ENCODE measurements at regions of chr14 and their contacts with region 1.

Region 1: DNA sequence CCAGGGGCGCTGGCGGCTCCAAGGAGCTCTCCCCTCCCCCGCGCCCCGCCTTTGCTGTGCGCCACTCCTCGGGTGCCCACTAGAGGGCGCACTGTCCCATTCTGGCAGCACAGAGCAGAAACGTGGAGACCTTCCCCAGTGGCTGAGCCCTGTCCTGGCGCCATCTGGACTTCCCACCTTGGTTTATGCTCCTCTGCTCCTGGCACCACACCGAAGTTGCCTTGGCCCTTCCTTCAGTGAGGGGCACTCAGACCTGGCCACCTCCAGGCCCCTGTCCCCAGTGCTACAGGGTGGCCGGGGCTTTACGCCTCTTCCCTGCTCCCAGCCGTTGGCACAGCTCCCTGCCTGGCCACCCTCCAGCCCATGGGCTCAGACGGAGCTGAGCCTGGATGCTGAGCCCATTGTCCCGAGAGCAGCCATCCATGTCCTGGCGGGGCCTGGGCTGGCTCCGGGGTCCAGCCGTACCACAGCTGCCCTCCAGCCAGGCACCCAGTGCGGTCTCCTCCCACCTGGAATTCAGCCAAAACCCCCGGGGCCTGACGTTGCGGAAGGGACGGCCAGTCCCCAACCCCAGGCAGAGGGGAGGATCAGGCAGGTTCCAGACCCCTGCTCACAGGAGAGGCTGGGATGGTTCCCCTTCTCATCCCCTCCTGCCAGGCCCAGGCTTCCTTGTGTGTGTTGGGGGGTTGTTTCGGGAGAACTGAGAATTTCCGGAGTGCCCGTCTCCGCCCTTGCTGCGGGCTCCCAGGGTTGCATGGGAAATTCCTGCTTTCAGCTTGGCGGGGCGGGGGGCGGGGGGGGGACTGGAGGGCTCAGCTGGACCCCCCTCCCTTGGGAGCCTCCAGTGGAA is 5.5 kb upstream of the CRIP1 start:
- DNase-seq: peak; percentile 83 to 91 (median 87)
- H3K4me3 ChIP-seq: peak overlapping the region; percentile 80
- H3K4me3 Mint-ChIP-seq: peak overlapping the region; percentile 78 to 94 (median 85)
- H3K27ac ChIP-seq: peak overlapping the region; percentile 100
- H3K27ac Mint-ChIP-seq: peak overlapping the region; percentile 99 to 100 (median 100)
- H3K4me1 ChIP-seq: peaks cover 80% of the 10 kb centered on the region
- H3K4me1 Mint-ChIP-seq: peaks cover 37 to 76% (median 56%) of the 10 kb centered on the region in 3 donors
- H3K27me3 ChIP-seq: no peaks in the 10 kb centered on the region
- H3K27me3 Mint-ChIP-seq: peaks cover 0 to 12% of the 10 kb centered on the region in 2 donors

Region 2: GRCh38 chr14:105363847-105364708 is 117.1 kb before region 1 on chr14:
- CTCF ChIA-PET with region 1: interaction called, 11 read pairs
- POLR2A ChIA-PET with region 1: no interaction called
- DNase-seq: peak; percentile 33 to 77 (median 60)
- H3K4me3 ChIP-seq: no peak overlapping the region
- H3K4me3 Mint-ChIP-seq: peak overlapping the region; percentile 55 to 84 (median 72)
- H3K27ac ChIP-seq: no peak overlapping the region
- H3K27ac Mint-ChIP-seq: peak overlapping the region; percentile 29 to 96 (median 56)
- H3K4me1 ChIP-seq: peaks cover 8% of the 10 kb centered on the region
- H3K4me1 Mint-ChIP-seq: peaks cover 5 to 16% (median 5%) of the 10 kb centered on the region in 3 donors
- H3K27me3 ChIP-seq: no peaks in the 10 kb centered on the region
- H3K27me3 Mint-ChIP-seq: no peaks in the 10 kb centered on the region

Region 3: DNA sequence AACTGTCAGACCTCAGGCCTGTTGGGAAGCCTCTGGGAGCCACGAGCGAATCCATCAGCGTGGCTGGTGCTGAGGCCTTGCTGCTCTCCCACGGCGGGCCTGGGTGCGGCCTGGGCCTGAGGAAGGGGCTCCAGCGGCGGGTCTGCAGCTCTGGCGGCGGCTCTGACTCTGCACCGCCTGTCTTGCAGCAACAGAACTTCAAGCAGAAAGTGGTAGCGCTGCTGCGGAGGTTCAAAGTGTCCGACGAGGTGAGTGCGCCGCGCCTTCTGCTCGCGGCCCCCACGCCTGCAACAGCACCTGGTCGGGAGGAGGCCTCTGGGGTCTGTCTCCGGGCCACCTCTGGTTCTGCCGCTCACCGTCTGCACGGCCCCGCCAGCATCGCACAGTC is 111.5 kb before region 1 on chr14:
- CTCF ChIA-PET with region 1: interaction called, 13 read pairs
- POLR2A ChIA-PET with region 1: no interaction called
- DNase-seq: no peak
- H3K4me3 ChIP-seq: no peak overlapping the region
- H3K4me3 Mint-ChIP-seq: no peak overlapping the region
- H3K27ac ChIP-seq: no peak overlapping the region
- H3K27ac Mint-ChIP-seq: no peak overlapping the region
- H3K4me1 ChIP-seq: peaks cover 14% of the 10 kb centered on the region
- H3K4me1 Mint-ChIP-seq: peaks cover 3 to 5% (median 5%) of the 10 kb centered on the region in 3 donors
- H3K27me3 ChIP-seq: no peaks in the 10 kb centered on the region
- H3K27me3 Mint-ChIP-seq: no peaks in the 10 kb centered on the region